Activated T-helper 1 cell treated with anti-CD3 and anti-CD28 coated beads, Interleukin-12 subunit alpha, Interleukin-12 subunit beta, Interleukin-2, Interleukin-4 antibody, amounts not matched to agents 30 ng/mL and 10 ng/mL and 1 ng/mL, durations not matched to agents 14 hours and 24 hours and 36 hours (primary cell): ENCODE measurements at regions of chr7 and their contacts with region 1.

Region 1: GRCh38 chr7:155205368-155206317 is 92.0 kb upstream of the INSIG1 start:
- DNase-seq: peak; percentile 86
- H3K4me3 Mint-ChIP-seq: peak overlapping the region; percentile 84
- H3K27ac Mint-ChIP-seq: peak overlapping the region; percentile 99
- H3K4me1 Mint-ChIP-seq: peaks cover 31% of the 10 kb centered on the region
- H3K27me3 Mint-ChIP-seq: no peaks in the 10 kb centered on the region

Region 2: GRCh38 chr7:155190688-155191087 is 15.0 kb before region 1 on chr7:
- intact Hi-C with region 1: loop called (anchors 1 kb)
- DNase-seq: peak; percentile 44
- H3K4me3 Mint-ChIP-seq: no peak overlapping the region
- H3K27ac Mint-ChIP-seq: peak overlapping the region; percentile 55
- H3K4me1 Mint-ChIP-seq: peaks cover 17% of the 10 kb centered on the region
- H3K27me3 Mint-ChIP-seq: peaks cover 13% of the 10 kb centered on the region

Region 3: GRCh38 chr7:155344600-155345433 is 139.2 kb after region 1 on chr7:
- intact Hi-C with region 1: loop called (anchors 1 kb)
- DNase-seq: peak; percentile 73
- H3K4me3 Mint-ChIP-seq: peak overlapping the region; percentile 35
- H3K27ac Mint-ChIP-seq: no peak overlapping the region
- H3K4me1 Mint-ChIP-seq: peaks cover 7% of the 10 kb centered on the region
- H3K27me3 Mint-ChIP-seq: peaks cover 15% of the 10 kb centered on the region

Region 4: DNA sequence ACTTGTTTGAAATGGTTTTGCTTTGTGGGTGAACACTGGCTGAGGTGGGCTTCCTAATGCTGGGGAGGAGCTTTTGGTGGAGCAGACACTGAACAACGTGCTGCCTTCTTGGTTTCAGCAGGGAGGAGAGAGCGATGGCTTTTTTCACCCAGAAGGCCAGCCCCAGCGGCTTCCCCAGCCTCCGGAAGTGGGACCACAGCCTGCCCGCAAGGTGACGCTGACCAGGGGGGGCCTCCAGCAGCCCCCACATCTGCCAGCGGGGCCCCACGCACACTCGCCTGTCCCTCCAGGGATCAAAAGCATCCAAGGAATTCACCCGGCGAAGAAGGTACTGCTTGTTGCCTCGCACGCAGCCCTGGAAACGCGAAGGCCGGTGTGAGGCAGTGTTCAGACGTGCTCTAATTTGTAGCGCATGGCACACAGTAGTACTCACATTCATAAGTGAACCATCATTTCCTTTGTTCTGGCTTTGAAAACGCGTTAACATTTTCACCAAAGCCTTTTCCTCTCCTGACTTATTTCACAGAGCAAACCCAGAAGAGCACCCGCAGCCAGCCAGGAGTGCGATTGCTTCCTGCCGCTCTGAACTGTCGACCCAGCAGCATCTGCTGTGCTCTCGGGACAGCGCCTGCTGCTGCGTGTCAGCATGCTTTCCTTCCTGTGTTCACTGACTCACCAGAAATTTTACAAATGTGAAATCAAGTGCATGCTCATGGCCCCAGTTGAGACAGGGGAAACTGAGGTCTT is 558.2 kb after region 1 on chr7:
- intact Hi-C with region 1: loop called (anchors 1 kb)
- DNase-seq: peak; percentile 65
- H3K4me3 Mint-ChIP-seq: peak overlapping the region; percentile 85
- H3K27ac Mint-ChIP-seq: peak overlapping the region; percentile 100
- H3K4me1 Mint-ChIP-seq: peaks cover 66% of the 10 kb centered on the region
- H3K27me3 Mint-ChIP-seq: no peaks in the 10 kb centered on the region